Activated T-helper 2 cell treated with anti-CD3 and anti-CD28 coated beads, Interferon-gamma antibody, Interleukin-2, Interleukin-4, amounts not matched to agents 10 μg/mL and 5 μg/mL and 100 μg/mL, durations not matched to agents 14 hours and 24 hours and 36 hours (primary cell): ENCODE measurements at regions of chr12 and their contacts with region 1.

Region 1: DNA sequence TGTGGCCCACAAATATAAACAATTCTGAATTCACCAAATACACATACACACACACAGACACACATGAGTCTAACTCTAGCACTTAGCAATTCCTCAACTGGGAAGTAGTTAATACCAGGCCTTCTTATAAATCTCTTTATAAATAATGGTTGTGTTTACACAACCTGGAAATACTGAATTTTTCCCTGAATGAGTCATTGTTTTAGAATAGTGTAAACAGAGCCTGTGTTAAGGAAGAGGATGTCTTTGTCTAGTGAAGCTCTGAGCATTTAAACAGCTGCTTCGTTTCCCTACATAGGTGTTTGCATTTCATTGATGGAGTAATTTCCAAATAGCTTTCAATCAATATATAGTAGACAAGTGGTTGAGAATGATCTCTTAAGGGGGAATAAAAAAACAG is 218.8 kb downstream of the BTG1 start:
- DNase-seq: no peak
- H3K4me3 Mint-ChIP-seq: no peak overlapping the region
- H3K27ac Mint-ChIP-seq: no peak overlapping the region
- H3K4me1 Mint-ChIP-seq: peaks cover 6% of the 10 kb centered on the region
- H3K27me3 Mint-ChIP-seq: no peaks in the 10 kb centered on the region

Region 2: GRCh38 chr12:91902860-91903683 is 23.8 kb before region 1 on chr12:
- intact Hi-C with region 1: loop called (anchors 2 kb)
- DNase-seq: no peak
- H3K4me3 Mint-ChIP-seq: no peak overlapping the region
- H3K27ac Mint-ChIP-seq: no peak overlapping the region
- H3K4me1 Mint-ChIP-seq: peaks cover 8% of the 10 kb centered on the region
- H3K27me3 Mint-ChIP-seq: no peaks in the 10 kb centered on the region